ENCODE measurements at regions of chr1 and their contacts with region 1.

Region 1: GRCh38 chr1:32798679-32799416 is 18.3 kb downstream of the YARS1 start:
- DNase-seq: no peak
- ATAC-seq: peak; percentile 86
- H3K4me3 Mint-ChIP-seq: peak overlapping the region; percentile 63
- H3K27ac Mint-ChIP-seq: peak overlapping the region; percentile 84
- H3K4me1 Mint-ChIP-seq: peaks cover 43% of the 10 kb centered on the region
- H3K27me3 Mint-ChIP-seq: no peaks in the 10 kb centered on the region

Region 2: DNA sequence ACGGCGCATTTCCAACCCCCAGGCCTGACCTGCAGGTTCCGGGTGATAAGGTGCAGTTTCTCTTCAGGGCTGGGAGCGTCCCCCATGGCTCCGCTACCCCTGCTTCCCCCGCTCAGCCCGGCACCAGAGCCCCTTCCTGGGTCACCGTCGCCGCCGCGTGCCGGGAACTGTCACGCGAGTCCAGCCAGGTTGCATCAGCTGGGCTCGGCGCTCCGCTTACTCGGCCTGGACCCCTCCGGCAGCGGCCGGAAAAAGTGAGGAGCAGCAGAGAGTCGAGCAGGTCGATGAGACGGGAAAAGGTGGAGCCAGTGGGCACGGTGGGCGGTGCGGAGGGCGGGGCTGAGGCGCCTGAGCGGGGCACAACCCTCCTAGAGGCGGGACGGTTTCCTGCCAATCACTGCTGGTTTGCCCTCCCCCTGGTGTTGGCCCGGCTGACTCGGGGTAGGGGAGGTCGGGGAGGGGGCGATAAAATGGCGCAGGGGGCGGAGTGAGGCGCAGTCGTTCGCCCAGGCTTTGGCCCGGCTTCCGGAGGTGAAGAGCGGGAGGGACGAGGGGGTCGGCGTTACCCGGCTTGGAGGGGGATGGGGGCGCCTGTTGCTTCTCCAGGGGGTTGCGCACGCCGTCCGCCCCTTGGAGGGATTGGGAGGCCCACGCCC is 18.4 kb after region 1 on chr1 and contains the starts of genes S100PBP and YARS1:
- POLR2A ChIA-PET with region 1: interaction called, 10 read pairs
- DNase-seq: peak; percentile 100
- ATAC-seq: peak; percentile 89
- H3K4me3 Mint-ChIP-seq: peak within 1 kb of the TSS; percentile 97
- H3K27ac Mint-ChIP-seq: peak within 1 kb of the TSS; percentile 88
- H3K4me1 Mint-ChIP-seq: peaks cover 40% of the 10 kb centered on the region
- H3K27me3 Mint-ChIP-seq: no peaks in the 10 kb centered on the region
- total RNA-seq, gene S100PBP: 75.8 to 78.5 TPM
- total RNA-seq, gene YARS1: 180 to 181 TPM